CD8-positive, alpha-beta T cell (primary cell): ENCODE measurements at regions of chr13 and their contacts with region 1.

Region 1: GRCh38 chr13:21297914-21298831 is 121.7 kb downstream of the MRPL57 start:
- DNase-seq: peak; percentile 64 to 95 (median 84)
- ATAC-seq: peak; percentile 96
- H3K4me3 ChIP-seq: peak overlapping the region; percentile 69 to 78
- H3K4me3 Mint-ChIP-seq: peak overlapping the region; percentile 89
- H3K27ac ChIP-seq: peak overlapping the region; percentile 47 to 74
- H3K27ac Mint-ChIP-seq: peak overlapping the region; percentile 74
- H3K4me1 ChIP-seq: peaks cover 14% of the 10 kb centered on the region
- H3K4me1 Mint-ChIP-seq: peaks cover 18% of the 10 kb centered on the region
- H3K27me3 ChIP-seq: no peaks in the 10 kb centered on the region
- H3K27me3 Mint-ChIP-seq: no peaks in the 10 kb centered on the region
- CTCF ChIP-seq: peak; percentile 94

Region 2: GRCh38 chr13:19782049-19782726 is 1516.0 kb before region 1 on chr13:
- CTCF ChIA-PET with region 1: no interaction called
- POLR2A ChIA-PET with region 1: no interaction called
- intact Hi-C with region 1: loop called in 1 of 2 experiments (anchors 5 kb)
- DNase-seq: peak; percentile 22 to 73 (median 55)
- ATAC-seq: peak; percentile 54
- H3K4me3 ChIP-seq: peak overlapping the region; percentile 94 to 95
- H3K4me3 Mint-ChIP-seq: peak overlapping the region; percentile 99
- H3K27ac ChIP-seq: peak overlapping the region; percentile 89 to 94
- H3K27ac Mint-ChIP-seq: peak overlapping the region; percentile 99
- H3K4me1 ChIP-seq: no peaks in the 10 kb centered on the region
- H3K4me1 Mint-ChIP-seq: peaks cover 6% of the 10 kb centered on the region
- H3K27me3 ChIP-seq: no peaks in the 10 kb centered on the region
- H3K27me3 Mint-ChIP-seq: no peaks in the 10 kb centered on the region
- CTCF ChIP-seq: no peak

Region 3: GRCh38 chr13:20566898-20567874 is 731.0 kb before region 1 on chr13 and contains the start of gene IFT88:
- CTCF ChIA-PET with region 1: no interaction called
- POLR2A ChIA-PET with region 1: no interaction called
- intact Hi-C with region 1: loop called in 1 of 2 experiments (anchors 10 kb)
- DNase-seq: peak; percentile 49 to 90 (median 80)
- ATAC-seq: peak; percentile 86
- H3K4me3 ChIP-seq: peak within 1 kb of the TSS; percentile 70 to 71
- H3K4me3 Mint-ChIP-seq: peak within 1 kb of the TSS; percentile 87
- H3K27ac ChIP-seq: peak within 1 kb of the TSS; percentile 70 to 77
- H3K27ac Mint-ChIP-seq: peak within 1 kb of the TSS; percentile 89
- H3K4me1 ChIP-seq: no peaks in the 10 kb centered on the region
- H3K4me1 Mint-ChIP-seq: peaks cover 17% of the 10 kb centered on the region
- H3K27me3 ChIP-seq: no peaks in the 10 kb centered on the region
- H3K27me3 Mint-ChIP-seq: no peaks in the 10 kb centered on the region
- CTCF ChIP-seq: no peak
- total RNA-seq, gene IFT88: 7.5 to 8.2 TPM

Region 4: GRCh38 chr13:21176220-21176982 is 121.8 kb before region 1 on chr13 and contains the starts of genes MRPL57 and SKA3:
- CTCF ChIA-PET with region 1: no interaction called
- POLR2A ChIA-PET with region 1: interaction called, 3 read pairs
- intact Hi-C with region 1: loop called (anchors 1 to 2 kb)
- DNase-seq: peak; percentile 86 to 97 (median 93)
- ATAC-seq: peak; percentile 97
- H3K4me3 ChIP-seq: peak within 1 kb of the TSS; percentile 83 to 93
- H3K4me3 Mint-ChIP-seq: peak within 1 kb of the TSS; percentile 97
- H3K27ac ChIP-seq: peak within 1 kb of the TSS; percentile 80 to 92
- H3K27ac Mint-ChIP-seq: peak within 1 kb of the TSS; percentile 96
- H3K4me1 ChIP-seq: peaks cover 18% of the 10 kb centered on the region
- H3K4me1 Mint-ChIP-seq: peaks cover 26% of the 10 kb centered on the region
- H3K27me3 ChIP-seq: no peaks in the 10 kb centered on the region
- H3K27me3 Mint-ChIP-seq: no peaks in the 10 kb centered on the region
- CTCF ChIP-seq: no peak
- total RNA-seq, gene MRPL57: 9.8 to 11.1 TPM
- total RNA-seq, gene SKA3: 0.36 to 0.49 TPM

Region 5: DNA sequence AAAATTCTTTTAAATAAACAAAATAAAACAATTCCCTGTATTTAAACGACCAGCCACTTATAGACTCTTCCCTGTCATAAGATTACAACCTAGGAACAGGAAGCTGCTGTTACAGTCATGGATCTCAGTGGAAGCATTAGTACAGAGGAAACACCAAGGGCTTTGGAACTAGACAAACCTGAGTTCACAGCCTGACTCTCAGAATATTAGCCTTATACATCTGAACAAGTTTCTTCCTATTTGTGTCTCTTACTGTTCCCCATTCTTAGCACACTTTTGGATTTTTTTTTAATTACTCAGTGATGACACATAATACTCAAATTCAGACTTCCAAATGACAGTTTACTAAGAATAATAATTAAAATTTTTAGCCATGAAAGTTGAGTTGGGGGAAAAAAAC is 114.8 kb after region 1 on chr13:
- CTCF ChIA-PET with region 1: no interaction called
- POLR2A ChIA-PET with region 1: no interaction called
- intact Hi-C with region 1: no loop called
- DNase-seq: no peak
- ATAC-seq: no peak
- H3K4me3 ChIP-seq: no peak overlapping the region
- H3K4me3 Mint-ChIP-seq: no peak overlapping the region
- H3K27ac ChIP-seq: no peak overlapping the region
- H3K27ac Mint-ChIP-seq: no peak overlapping the region
- H3K4me1 ChIP-seq: no peaks in the 10 kb centered on the region
- H3K4me1 Mint-ChIP-seq: peaks cover 11% of the 10 kb centered on the region
- H3K27me3 ChIP-seq: no peaks in the 10 kb centered on the region
- H3K27me3 Mint-ChIP-seq: no peaks in the 10 kb centered on the region
- CTCF ChIP-seq: no peak

Region 6: DNA sequence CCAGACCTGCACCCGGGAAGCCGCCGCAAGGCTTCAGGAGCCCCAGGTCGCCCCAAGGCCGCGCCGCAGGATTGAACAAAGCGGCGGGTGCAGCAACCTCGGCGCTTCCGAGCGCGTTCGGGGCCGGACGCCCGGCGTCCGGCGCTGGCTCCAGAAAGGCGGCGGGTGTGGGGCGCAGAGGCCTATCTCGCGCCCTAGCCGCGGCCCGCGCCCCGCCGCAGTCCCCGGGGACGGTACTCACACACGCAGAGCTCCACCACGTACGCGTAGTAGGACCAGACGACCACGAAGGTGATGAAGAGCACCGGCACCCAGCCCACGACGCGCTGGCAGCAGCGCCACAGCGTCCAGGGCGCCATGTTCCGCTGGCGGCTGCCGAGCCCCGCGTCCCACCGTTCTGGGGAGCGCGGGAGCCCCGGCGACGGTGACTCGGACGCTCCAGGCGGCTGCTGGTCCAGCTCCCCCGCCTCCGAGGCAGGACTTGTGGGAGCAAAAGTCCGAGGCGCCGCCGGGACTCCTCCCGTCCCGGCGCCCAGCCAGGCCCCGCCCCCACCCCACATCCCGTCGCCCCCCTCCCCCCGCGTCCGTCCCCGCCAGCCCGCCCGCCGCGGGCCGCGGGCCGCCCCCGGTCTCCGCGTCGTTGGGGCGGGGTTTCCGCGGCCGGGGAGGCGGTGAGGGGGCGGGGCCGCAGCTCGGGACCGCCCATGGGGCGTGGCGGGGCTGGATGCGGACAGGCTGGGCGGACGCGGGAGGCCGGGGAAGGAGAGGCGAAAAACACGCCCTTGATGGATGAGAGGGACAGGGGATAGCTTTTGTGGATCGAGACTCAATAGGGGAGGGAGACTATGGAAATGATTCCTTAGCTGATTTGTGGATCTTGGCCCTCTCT is 160.9 kb after region 1 on chr13 and contains the start of gene ZDHHC20:
- CTCF ChIA-PET with region 1: interaction called, 11 read pairs
- POLR2A ChIA-PET with region 1: interaction called, 3 read pairs
- intact Hi-C with region 1: loop called (anchors 1 to 2 kb)
- DNase-seq: peak; percentile 77 to 96 (median 90)
- ATAC-seq: peak; percentile 93
- H3K4me3 ChIP-seq: peak within 1 kb of the TSS; percentile 69 to 78
- H3K4me3 Mint-ChIP-seq: peak within 1 kb of the TSS; percentile 95
- H3K27ac ChIP-seq: peak within 1 kb of the TSS; percentile 80 to 89
- H3K27ac Mint-ChIP-seq: peak within 1 kb of the TSS; percentile 96
- H3K4me1 ChIP-seq: peaks cover 15% of the 10 kb centered on the region
- H3K4me1 Mint-ChIP-seq: peaks cover 45% of the 10 kb centered on the region
- H3K27me3 ChIP-seq: no peaks in the 10 kb centered on the region
- H3K27me3 Mint-ChIP-seq: no peaks in the 10 kb centered on the region
- CTCF ChIP-seq: no peak
- total RNA-seq, gene ZDHHC20: 81.0 to 81.1 TPM

Region 7: DNA sequence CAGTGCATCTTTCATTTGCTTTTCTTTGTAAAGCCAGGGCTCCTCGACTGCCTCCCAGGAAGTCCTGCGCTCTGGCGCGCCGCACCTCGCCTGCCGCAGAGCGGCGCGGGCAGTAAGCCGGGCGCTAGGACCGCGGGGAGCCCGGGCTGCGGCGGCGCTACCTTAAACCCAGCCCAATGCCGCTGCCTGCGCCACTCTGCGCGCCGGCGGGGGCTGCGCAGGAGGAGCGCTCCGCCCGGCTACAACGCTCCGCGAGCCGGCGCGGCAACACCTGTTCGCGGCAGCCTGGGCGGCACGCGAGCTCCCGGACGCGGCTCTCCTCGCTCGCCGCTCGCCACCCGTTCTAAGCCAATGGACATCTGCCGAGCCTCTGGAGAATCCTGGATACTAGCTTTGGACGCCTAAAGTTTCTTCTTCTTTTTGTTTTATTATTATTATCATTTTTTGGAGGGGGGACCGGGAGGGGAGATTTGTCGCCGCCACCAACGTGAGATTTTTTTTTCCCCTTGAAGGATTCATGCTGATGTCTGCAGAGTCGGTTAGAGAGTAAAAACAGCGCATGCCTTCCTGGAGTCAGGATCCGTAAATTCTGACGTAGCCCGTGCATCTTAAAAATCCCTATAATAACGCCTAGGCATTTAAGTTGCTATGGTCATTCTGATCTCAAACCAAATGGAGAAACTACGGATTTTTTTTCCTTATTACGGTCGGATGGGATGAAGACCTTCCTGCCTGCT is 372.9 kb after region 1 on chr13 and contains the start of gene FGF9:
- CTCF ChIA-PET with region 1: no interaction called
- POLR2A ChIA-PET with region 1: no interaction called
- intact Hi-C with region 1: loop called in 1 of 2 experiments (anchors 5 kb)
- DNase-seq: peak; percentile 57 to 93 (median 78)
- ATAC-seq: peak; percentile 66
- H3K4me3 ChIP-seq: peak within 1 kb of the TSS; percentile 67 to 80
- H3K4me3 Mint-ChIP-seq: peak within 1 kb of the TSS; percentile 88
- H3K27ac ChIP-seq: peak within 1 kb of the TSS; percentile 32 to 56
- H3K27ac Mint-ChIP-seq: peak within 1 kb of the TSS; percentile 88
- H3K4me1 ChIP-seq: peaks cover 30% of the 10 kb centered on the region
- H3K4me1 Mint-ChIP-seq: peaks cover 49% of the 10 kb centered on the region
- H3K27me3 ChIP-seq: peaks cover 0 to 4% of the 10 kb centered on the region in 2 experiments
- H3K27me3 Mint-ChIP-seq: peaks cover 10% of the 10 kb centered on the region
- CTCF ChIP-seq: no peak
- total RNA-seq, gene FGF9: 7.6 to 8.2 TPM